Activated CD8-positive, alpha-beta T cell treated with anti-CD3 and anti-CD28 coated beads for 36 hours (primary cell): ENCODE measurements at regions of chr1 and their contacts with region 1.

Region 1: GRCh38 chr1:32933742-32934322 is 30.8 kb downstream of the RNF19B start:
- DNase-seq: no peak
- ATAC-seq: no peak
- H3K4me3 Mint-ChIP-seq: no peak overlapping the region
- H3K27ac Mint-ChIP-seq: no peak overlapping the region
- H3K4me1 Mint-ChIP-seq: peaks cover 5% of the 10 kb centered on the region
- H3K27me3 Mint-ChIP-seq: no peaks in the 10 kb centered on the region
- CTCF ChIP-seq: peak; percentile 35

Region 2: GRCh38 chr1:32828341-32828740 is 105.5 kb before region 1 on chr1:
- CTCF ChIA-PET with region 1: no interaction called
- POLR2A ChIA-PET with region 1: no interaction called
- intact Hi-C with region 1: no loop called
- DNase-seq: no peak
- ATAC-seq: no peak
- H3K4me3 Mint-ChIP-seq: no peak overlapping the region
- H3K27ac Mint-ChIP-seq: no peak overlapping the region
- H3K4me1 Mint-ChIP-seq: peaks cover 20% of the 10 kb centered on the region
- H3K27me3 Mint-ChIP-seq: no peaks in the 10 kb centered on the region
- CTCF ChIP-seq: no peak

Region 3: DNA sequence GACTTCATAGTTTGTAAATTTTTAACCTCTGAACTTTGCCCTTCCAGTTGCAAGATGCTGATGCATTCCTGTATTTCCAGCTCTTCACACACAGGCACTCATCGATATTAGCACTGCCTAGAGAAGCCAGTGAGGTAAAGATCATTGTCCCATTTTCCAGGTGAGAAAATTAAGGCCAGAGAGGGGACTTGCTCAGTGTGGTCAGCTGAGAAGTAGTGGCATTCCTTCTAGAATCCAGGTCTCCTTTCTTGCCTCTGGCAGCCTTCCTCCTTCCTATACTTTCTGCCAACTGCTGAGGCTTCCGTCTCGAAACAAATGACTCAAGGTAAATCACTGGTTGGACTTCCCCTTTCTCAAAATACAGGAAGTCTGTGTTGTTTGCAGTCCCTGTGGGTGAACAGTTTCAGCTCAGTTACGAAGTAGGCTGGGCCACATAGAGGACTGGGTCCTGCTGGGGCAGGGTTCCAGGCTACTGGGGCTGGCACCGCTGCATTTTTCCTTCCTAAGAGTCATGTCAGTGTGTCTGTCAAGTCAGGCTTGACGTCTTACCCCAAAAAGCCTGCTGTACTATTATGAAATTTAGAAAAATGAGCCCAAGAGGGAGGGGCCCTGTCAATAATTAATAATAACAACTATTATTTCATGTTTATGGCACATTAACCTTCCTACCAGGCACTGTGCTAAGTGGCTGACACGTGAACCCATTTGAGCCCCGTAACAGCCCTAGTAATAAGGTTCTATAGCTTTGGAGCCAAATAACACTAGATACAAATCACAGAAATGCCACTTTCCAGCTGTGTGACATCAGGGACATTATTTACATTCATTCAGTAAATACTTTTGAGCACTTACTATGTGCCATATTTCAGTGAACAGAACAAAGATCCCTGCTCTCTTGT is 47.4 kb after region 1 on chr1:
- CTCF ChIA-PET with region 1: interaction called, 10 read pairs
- POLR2A ChIA-PET with region 1: interaction called, 4 read pairs
- intact Hi-C with region 1: no loop called
- DNase-seq: peak; percentile 74
- ATAC-seq: peak; percentile 97
- H3K4me3 Mint-ChIP-seq: peak overlapping the region; percentile 28
- H3K27ac Mint-ChIP-seq: peak overlapping the region; percentile 78
- H3K4me1 Mint-ChIP-seq: peaks cover 44% of the 10 kb centered on the region
- H3K27me3 Mint-ChIP-seq: no peaks in the 10 kb centered on the region
- CTCF ChIP-seq: no peak

Region 4: DNA sequence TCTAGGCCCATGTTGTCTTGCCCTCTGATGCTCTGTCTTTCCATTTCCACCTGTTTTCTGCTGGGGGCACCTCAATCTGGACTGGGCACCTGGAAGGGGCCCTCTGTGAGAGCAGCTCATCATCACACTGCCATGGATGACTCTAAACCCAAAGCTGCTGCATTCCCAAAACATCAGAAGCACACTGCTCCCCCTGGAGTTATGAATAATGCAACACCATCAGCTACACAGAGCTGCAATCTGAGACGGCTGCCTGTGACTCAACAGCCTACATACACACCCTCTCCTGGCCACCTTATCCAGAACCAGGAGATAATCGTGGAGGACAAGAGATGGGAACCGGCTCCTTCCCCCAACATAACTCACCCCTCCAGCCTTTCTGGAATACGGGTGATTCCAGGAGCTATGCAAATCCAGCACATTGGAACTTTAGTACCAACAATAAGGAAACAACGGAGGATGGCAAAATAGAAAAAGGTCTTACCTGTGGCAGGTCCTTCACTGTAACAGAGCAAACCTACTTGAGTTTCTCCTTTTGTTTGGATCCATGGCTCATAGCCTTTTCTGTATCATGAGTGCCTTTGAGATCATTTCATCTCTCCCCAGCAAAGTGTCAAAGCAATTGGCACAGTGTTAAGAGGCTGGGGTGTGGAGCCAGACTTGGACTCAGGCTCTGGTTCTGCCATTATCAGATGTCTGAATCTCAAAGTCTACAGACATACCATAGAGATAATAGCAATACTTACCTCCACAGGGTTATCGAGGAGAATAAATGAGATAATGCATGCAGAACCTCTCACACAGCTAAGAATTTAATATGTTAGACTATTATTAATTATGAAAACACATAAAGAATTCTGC is 73.6 kb after region 1 on chr1:
- CTCF ChIA-PET with region 1: interaction called, 34 read pairs
- POLR2A ChIA-PET with region 1: no interaction called
- intact Hi-C with region 1: no loop called
- DNase-seq: no peak
- ATAC-seq: no peak
- H3K4me3 Mint-ChIP-seq: no peak overlapping the region
- H3K27ac Mint-ChIP-seq: no peak overlapping the region
- H3K4me1 Mint-ChIP-seq: peaks cover 20% of the 10 kb centered on the region
- H3K27me3 Mint-ChIP-seq: no peaks in the 10 kb centered on the region
- CTCF ChIP-seq: no peak

Region 5: DNA sequence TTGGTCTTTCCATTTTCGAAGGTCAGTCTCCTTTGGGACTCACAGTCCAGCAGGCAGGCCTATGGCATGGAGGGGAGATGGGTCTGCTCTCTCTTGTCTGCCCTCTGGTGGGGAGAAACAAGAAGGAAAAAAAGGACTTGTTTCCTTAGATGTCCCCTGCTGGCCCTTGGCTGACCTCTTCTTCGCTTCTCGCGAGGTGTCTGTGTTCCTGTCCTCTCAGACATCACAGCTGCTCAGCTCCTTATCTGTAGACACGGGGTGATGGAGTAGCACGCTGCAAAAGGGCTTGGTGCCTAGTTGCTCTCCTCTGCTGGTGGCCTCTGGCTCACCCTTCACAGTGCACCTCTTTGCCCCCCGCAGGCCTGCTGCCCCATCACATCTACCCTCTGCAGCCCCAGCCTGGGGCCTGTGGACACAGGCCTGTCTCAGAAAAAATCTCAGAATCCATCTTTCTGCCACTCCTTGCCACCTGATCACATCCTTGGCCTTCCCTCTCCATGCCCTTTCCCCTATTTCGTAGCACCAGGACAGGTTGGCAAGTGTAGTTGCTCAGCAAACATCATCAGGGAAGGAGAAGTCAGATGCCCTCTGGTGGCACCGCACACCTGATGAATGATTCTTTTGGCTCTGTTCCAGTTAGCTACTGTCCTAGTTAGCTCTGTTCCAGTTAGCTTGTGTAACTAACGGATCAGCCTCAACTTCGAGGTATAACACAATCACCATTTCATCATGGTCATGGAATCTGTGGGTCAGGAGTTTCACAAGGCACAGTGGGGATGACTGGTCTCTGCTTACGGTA is 121.6 kb after region 1 on chr1:
- CTCF ChIA-PET with region 1: interaction called, 104 read pairs
- POLR2A ChIA-PET with region 1: no interaction called
- intact Hi-C with region 1: loop called (anchors 2 kb)
- DNase-seq: peak; percentile 41
- ATAC-seq: peak; percentile 77
- H3K4me3 Mint-ChIP-seq: no peak overlapping the region
- H3K27ac Mint-ChIP-seq: no peak overlapping the region
- H3K4me1 Mint-ChIP-seq: peaks cover 4% of the 10 kb centered on the region
- H3K27me3 Mint-ChIP-seq: no peaks in the 10 kb centered on the region
- CTCF ChIP-seq: peak; percentile 76

Region 6: DNA sequence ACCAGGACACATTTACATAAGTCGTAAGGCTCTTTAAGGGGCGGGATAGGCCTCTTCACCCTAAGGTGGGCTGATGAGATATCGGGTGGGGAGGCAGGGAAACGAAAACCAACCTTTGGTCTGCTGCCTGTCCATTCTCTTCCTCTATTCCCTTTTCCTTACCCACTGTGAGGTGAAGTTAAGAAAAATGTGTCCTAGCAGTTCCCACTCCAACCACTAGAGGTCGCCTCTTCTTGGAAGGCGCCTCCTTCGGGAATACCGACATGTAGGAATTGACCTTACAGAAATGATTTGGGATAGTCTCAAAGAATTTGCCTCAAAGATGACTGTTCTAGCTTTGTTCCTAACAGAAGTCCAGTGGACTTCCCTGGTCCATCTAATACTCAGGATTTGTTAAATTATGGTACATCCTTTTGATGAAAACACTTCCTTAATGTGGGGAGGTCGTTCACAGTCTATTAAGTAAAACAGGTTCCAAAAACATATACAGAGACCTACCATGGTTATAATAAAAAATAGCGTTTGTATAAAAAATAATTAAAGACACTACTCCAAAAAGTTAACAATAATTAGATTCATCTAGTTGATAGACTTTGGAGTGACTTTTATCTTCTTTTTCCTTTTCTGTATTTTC is 161.3 kb after region 1 on chr1:
- CTCF ChIA-PET with region 1: interaction called, 10 read pairs
- POLR2A ChIA-PET with region 1: no interaction called
- intact Hi-C with region 1: no loop called
- DNase-seq: no peak
- ATAC-seq: no peak
- H3K4me3 Mint-ChIP-seq: no peak overlapping the region
- H3K27ac Mint-ChIP-seq: no peak overlapping the region
- H3K4me1 Mint-ChIP-seq: peaks cover 36% of the 10 kb centered on the region
- H3K27me3 Mint-ChIP-seq: no peaks in the 10 kb centered on the region
- CTCF ChIP-seq: peak; percentile 100